Mammary epithelial cell (primary cell): ENCODE measurements at regions of chr3 and their contacts with region 1.

Region 1: DNA sequence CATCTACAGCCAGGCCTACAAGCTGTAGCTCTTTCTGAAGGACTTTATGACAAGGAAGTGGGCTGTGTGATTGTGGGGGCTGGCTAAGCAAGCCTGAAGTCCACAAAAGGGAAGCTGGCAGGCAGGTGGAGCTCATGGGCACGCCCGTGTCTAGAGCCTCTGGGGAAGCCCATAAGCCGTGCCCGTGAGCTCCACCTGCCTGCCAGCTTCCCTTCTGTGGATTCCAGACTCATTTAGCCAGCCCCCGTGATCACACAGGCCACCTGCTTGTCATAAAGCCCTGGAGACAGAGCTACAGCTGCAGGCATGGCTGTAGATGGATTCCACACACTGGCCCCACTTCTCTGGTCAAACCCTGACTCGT is 15.2 kb downstream of the EFCC1 start:
- DNase-seq: no peak
- H3K4me3 ChIP-seq: no peak overlapping the region
- H3K27ac ChIP-seq: no peak overlapping the region
- H3K4me1 ChIP-seq: no peaks in the 10 kb centered on the region
- H3K27me3 ChIP-seq: no peaks in the 10 kb centered on the region
- CTCF ChIP-seq: peak in 1 of 2 donors; percentile 45

Region 2: GRCh38 chr3:128910006-128910405 is 106.3 kb before region 1 on chr3:
- CTCF ChIA-PET with region 1: no interaction called
- dilution Hi-C with region 1: no loop called
- in situ Hi-C with region 1: no loop called
- intact Hi-C with region 1: no loop called
- DNase-seq: no peak
- H3K4me3 ChIP-seq: no peak overlapping the region
- H3K27ac ChIP-seq: no peak overlapping the region
- H3K4me1 ChIP-seq: no peaks in the 10 kb centered on the region
- H3K27me3 ChIP-seq: no peaks in the 10 kb centered on the region
- CTCF ChIP-seq: no peak

Region 3: DNA sequence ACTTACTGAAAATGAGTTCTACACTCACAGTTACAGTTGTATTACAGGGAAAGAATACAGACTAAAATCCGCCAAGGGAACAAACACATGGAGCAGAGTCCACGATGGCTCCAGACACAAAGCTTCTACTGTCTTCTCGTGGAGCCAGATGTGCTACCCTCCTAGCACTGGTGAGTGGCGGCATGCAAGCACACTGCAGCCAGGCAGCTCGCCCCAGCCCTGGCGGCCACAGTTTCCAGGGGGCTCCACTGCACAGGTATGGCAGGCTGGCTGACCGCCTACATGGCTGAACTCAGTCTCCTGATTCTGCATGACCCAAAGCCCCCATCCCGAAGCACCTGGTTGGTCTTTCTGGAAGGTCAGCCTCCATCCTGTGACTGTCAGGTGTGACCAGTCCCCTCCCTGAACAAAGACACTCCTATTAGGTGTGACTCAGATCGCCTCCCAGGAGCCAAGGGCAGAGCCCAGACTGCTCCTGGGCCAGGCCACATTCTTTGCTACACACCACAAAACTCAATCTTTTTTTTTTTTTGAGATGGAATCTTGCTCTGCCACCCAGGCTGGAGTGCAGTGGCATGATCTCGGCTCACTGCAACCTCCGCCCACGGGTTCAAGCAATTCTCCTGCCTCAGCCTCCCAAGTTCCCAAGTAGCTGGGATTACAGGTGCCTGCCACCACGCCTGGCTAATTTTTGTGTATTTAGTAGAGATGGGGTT is 74.0 kb before region 1 on chr3:
- CTCF ChIA-PET with region 1: no interaction called
- dilution Hi-C with region 1: loop called (anchors 5 kb)
- in situ Hi-C with region 1: no loop called
- intact Hi-C with region 1: no loop called
- DNase-seq: peak; percentile 65
- H3K4me3 ChIP-seq: no peak overlapping the region
- H3K27ac ChIP-seq: no peak overlapping the region
- H3K4me1 ChIP-seq: peaks cover 6% of the 10 kb centered on the region
- H3K27me3 ChIP-seq: no peaks in the 10 kb centered on the region
- CTCF ChIP-seq: no peak

Region 4: GRCh38 chr3:128984596-128984995 is 31.7 kb before region 1 on chr3:
- CTCF ChIA-PET with region 1: no interaction called
- dilution Hi-C with region 1: loop called (anchors 5 kb)
- in situ Hi-C with region 1: no loop called
- intact Hi-C with region 1: no loop called
- DNase-seq: peak; percentile 95
- H3K4me3 ChIP-seq: no peak overlapping the region
- H3K27ac ChIP-seq: peak overlapping the region; percentile 70
- H3K4me1 ChIP-seq: peaks cover 17% of the 10 kb centered on the region
- H3K27me3 ChIP-seq: no peaks in the 10 kb centered on the region
- CTCF ChIP-seq: no peak

Region 5: GRCh38 chr3:129068291-129068886 is 52.1 kb after region 1 on chr3:
- CTCF ChIA-PET with region 1: no interaction called
- dilution Hi-C with region 1: no loop called
- in situ Hi-C with region 1: no loop called
- intact Hi-C with region 1: no loop called
- DNase-seq: no peak
- H3K4me3 ChIP-seq: peak overlapping the region in 2 of 3 experiments; percentile 11 to 31
- H3K27ac ChIP-seq: no peak overlapping the region
- H3K4me1 ChIP-seq: peaks cover 7% of the 10 kb centered on the region
- H3K27me3 ChIP-seq: no peaks in the 10 kb centered on the region
- CTCF ChIP-seq: no peak

Region 6: GRCh38 chr3:129560901-129561594 is 544.7 kb after region 1 on chr3:
- CTCF ChIA-PET with region 1: no interaction called
- dilution Hi-C with region 1: no loop called
- in situ Hi-C with region 1: no loop called
- intact Hi-C with region 1: no loop called
- DNase-seq: no peak
- H3K4me3 ChIP-seq: no peak overlapping the region
- H3K27ac ChIP-seq: no peak overlapping the region
- H3K4me1 ChIP-seq: peaks cover 15% of the 10 kb centered on the region
- H3K27me3 ChIP-seq: no peaks in the 10 kb centered on the region
- CTCF ChIP-seq: no peak